ENCODE measurements at regions of chr4 and their contacts with region 1.

Region 1: GRCh38 chr4:185183619-185184281 is 20.1 kb downstream of the CFAP97 start:
- DNase-seq: peak; percentile 49 to 82
- ATAC-seq: peak; percentile 39 to 84; a peak in 4 of 6 replicates
- H3K4me3 ChIP-seq: no peak overlapping the region
- H3K27ac ChIP-seq: no peak overlapping the region
- H3K4me1 ChIP-seq: peaks cover 4% of the 10 kb centered on the region; the same call in 1 of the 3 replicates
- CTCF ChIP-seq: peak; percentile 71
- EP300 ChIP-seq: no peak
- POLR2A ChIP-seq: no peak
- RAD21 ChIP-seq: peak; percentile 52 to 59

Region 2: DNA sequence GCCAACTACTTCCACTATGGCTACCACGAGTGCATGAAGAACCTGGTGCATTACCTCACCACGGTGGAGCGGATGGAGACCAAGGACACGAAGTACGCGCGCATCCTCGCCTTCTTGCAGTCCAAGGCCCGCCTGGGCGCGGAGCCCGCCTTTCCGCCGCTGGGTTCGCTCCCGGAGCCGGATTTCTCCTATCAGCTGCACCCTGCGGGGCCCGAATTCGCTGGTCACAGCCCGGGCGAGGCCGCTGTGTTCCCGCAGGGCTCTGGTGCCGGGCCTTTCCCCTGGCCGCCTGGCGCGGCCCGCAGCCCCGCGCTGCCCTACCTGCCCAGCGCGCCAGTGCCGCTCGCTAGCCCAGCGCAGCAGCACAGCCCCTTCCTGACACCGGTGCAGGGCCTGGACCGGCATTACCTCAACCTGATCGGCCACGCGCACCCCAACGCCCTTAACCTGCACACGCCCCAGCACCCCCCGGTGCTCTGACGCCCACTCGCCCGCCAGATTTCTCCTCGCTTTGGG is 163.4 kb before region 1 on chr4:
- CTCF ChIA-PET with region 1: no interaction called
- POLR2A ChIA-PET with region 1: no interaction called
- DNase-seq: peak in 1 of 2 experiments; percentile 65
- ATAC-seq: peak in 1 of 2 experiments; percentile 61; a peak in 3 of 6 replicates
- H3K4me3 ChIP-seq: peak overlapping the region; percentile 17; the same call in 1 of the 3 replicates
- H3K27ac ChIP-seq: no peak overlapping the region
- H3K4me1 ChIP-seq: no peaks in the 10 kb centered on the region
- CTCF ChIP-seq: no peak
- EP300 ChIP-seq: no peak
- POLR2A ChIP-seq: no peak
- RAD21 ChIP-seq: no peak

Region 3: GRCh38 chr4:185142912-185143595 is 40.7 kb before region 1 on chr4 and contains the start of gene SLC25A4:
- CTCF ChIA-PET with region 1: interaction called, 13 read pairs
- POLR2A ChIA-PET with region 1: no interaction called
- DNase-seq: peak; percentile 62 to 77
- ATAC-seq: peak; percentile 96 to 98
- H3K4me3 ChIP-seq: peak within 1 kb of the TSS; percentile 93
- H3K27ac ChIP-seq: peak within 1 kb of the TSS; percentile 81 to 95
- H3K4me1 ChIP-seq: peaks cover 8% of the 10 kb centered on the region; the same call in 1 of the 3 replicates
- CTCF ChIP-seq: peak; percentile 30
- EP300 ChIP-seq: no peak
- POLR2A ChIP-seq: peak; percentile 98
- RAD21 ChIP-seq: no peak
- polyA plus RNA-seq, gene SLC25A4: 14.0 and 16.9 TPM in 2 replicates

Region 4: GRCh38 chr4:185171373-185172071 is 12.2 kb before region 1 on chr4:
- CTCF ChIA-PET with region 1: interaction called, 25 read pairs
- POLR2A ChIA-PET with region 1: no interaction called
- DNase-seq: no peak
- ATAC-seq: no peak
- H3K4me3 ChIP-seq: no peak overlapping the region
- H3K27ac ChIP-seq: no peak overlapping the region
- H3K4me1 ChIP-seq: no peaks in the 10 kb centered on the region
- CTCF ChIP-seq: no peak
- EP300 ChIP-seq: no peak
- POLR2A ChIP-seq: no peak
- RAD21 ChIP-seq: no peak

Region 5: DNA sequence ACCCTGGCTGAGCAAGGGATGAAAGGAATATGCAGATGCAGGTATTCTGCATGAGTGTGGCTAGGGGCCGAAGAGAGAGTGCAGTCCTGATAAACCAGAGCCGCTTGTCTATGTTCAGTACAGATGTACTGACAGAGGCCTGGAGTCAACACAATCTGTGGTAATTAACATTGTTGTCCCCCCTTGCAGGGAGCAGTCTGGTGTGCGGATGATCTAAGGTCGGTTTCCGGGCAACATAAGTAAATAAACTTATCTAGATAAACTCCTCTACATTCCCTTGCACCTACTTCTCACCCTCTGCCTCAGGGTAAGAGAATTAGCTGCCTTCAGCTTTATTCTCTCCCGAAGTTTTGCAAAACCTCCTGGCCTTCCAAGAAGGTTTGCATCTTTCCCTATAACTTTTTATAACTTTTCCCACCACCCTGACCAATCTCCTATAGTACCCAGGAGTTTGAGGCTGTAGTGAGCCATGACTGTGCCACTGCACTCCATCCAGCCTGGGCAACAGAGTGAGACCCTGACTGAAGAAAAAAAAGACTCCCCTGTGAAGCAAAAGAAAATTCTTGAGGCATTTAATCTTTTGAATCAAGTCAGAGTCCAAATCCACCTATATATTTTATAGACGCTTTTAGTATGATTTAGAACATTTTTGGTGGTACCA is 52.2 kb after region 1 on chr4:
- CTCF ChIA-PET with region 1: no interaction called
- POLR2A ChIA-PET with region 1: no interaction called
- DNase-seq: peak in 1 of 2 experiments; percentile 36
- ATAC-seq: peak in 1 of 2 experiments; percentile 30; a peak in 2 of 6 replicates
- H3K4me3 ChIP-seq: no peak overlapping the region
- H3K27ac ChIP-seq: no peak overlapping the region
- H3K4me1 ChIP-seq: peaks cover 6% of the 10 kb centered on the region; the same call in 1 of the 3 replicates
- CTCF ChIP-seq: no peak
- EP300 ChIP-seq: no peak
- POLR2A ChIP-seq: no peak
- RAD21 ChIP-seq: no peak